ENCODE measurements at regions of chr4 and their contacts with region 1.

Region 1: GRCh38 chr4:122602277-122603142 is 18.4 kb downstream of the IL21 start:
- DNase-seq: no peak

Region 2: GRCh38 chr4:122716825-122717448 is 114.4 kb after region 1 on chr4:
- intact Hi-C with region 1: loop called (anchors 5 kb)
- DNase-seq: peak in 7 of 10 donors; percentile 37 to 89 (median 52)

Region 3: GRCh38 chr4:122930862-122931261 is 328.4 kb after region 1 on chr4:
- intact Hi-C with region 1: loop called (anchors 10 kb)
- DNase-seq: no peak